ENCODE measurements at regions of chr4 and their contacts with region 1.

Region 1: DNA sequence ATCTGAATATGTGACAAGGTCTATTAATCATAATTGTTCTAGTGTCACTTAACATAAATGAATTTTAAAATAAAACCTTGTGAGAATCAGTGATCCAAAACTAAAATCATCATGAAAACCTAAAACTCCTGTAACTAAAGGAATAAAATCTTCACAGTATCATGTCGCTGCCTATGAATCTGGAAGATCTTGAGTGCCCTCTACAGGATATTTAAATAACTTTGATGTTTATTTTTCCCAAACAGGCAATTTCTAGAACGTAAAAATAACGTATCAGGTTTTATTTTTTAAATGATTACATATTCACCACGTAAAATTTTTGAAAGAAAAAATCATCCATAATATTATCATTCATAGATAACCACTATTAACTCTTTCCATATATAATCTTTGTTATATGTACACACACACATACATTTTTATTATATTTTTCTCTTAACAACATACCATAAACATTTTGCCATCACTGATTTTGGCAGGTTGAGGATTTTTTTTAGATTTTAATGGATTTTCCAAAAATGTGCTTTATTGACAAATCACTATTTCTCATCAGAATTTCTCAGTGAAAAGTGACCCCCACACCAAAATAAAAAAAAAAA is 79.6 kb downstream of the COMMD8 start:
- DNase-seq: no peak
- H3K4me3 Mint-ChIP-seq: no peak overlapping the region
- H3K27ac Mint-ChIP-seq: no peak overlapping the region
- H3K4me1 Mint-ChIP-seq: no peaks in the 10 kb centered on the region
- H3K27me3 Mint-ChIP-seq: peaks cover 9% of the 10 kb centered on the region
- CTCF ChIP-seq: no peak

Region 2: GRCh38 chr4:46844325-46844917 is 539.5 kb before region 1 on chr4:
- CTCF ChIA-PET with region 1: no interaction called
- intact Hi-C with region 1: loop called (anchors 2 kb)
- DNase-seq: peak; percentile 53
- H3K4me3 Mint-ChIP-seq: no peak overlapping the region
- H3K27ac Mint-ChIP-seq: no peak overlapping the region
- H3K4me1 Mint-ChIP-seq: no peaks in the 10 kb centered on the region
- H3K27me3 Mint-ChIP-seq: peaks cover 20% of the 10 kb centered on the region
- CTCF ChIP-seq: peak; percentile 59

Region 3: DNA sequence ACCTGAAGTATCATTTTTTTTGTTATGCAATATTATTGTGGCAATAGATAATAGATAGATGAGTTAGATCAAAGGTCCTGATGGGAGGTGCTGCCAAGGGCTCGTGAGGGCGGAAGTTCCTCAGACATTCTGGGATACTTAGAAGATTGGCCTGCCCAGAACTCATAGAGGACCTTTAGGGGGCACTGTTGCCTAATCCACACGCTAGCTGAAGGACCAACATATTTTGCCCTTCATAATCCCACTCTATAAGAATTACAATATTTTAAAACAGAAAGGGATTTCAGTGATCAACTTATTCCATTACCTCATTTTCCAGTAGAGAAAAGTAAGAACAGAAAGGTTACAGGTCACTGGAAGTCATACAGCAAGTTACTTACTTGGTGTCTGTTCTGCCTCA is 451.9 kb before region 1 on chr4:
- CTCF ChIA-PET with region 1: no interaction called
- intact Hi-C with region 1: loop called (anchors 5 kb)
- DNase-seq: peak; percentile 30
- H3K4me3 Mint-ChIP-seq: no peak overlapping the region
- H3K27ac Mint-ChIP-seq: no peak overlapping the region
- H3K4me1 Mint-ChIP-seq: no peaks in the 10 kb centered on the region
- H3K27me3 Mint-ChIP-seq: no peaks in the 10 kb centered on the region
- CTCF ChIP-seq: no peak

Region 4: DNA sequence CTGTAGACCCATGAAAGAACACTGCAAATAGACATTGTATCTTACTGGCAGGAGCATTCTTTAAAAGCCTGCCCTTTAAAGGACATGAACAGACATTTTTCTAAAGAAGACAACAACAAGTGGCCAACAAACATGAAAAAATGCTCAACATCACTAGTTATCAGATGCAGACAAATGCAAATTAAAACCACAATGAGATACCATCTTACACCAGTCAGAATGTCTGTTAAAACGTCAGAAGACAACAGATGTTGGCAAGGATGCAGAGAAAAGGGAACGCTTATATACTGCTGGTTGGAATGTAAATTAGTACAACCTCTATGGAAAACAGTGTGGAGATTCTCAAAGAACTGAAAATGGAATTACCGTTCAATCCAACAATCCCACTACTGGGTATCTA is 178.4 kb after region 1 on chr4:
- CTCF ChIA-PET with region 1: no interaction called
- intact Hi-C with region 1: loop called (anchors 10 kb)
- DNase-seq: no peak
- H3K4me3 Mint-ChIP-seq: no peak overlapping the region
- H3K27ac Mint-ChIP-seq: no peak overlapping the region
- H3K4me1 Mint-ChIP-seq: peaks cover 10% of the 10 kb centered on the region
- H3K27me3 Mint-ChIP-seq: no peaks in the 10 kb centered on the region
- CTCF ChIP-seq: no peak

Region 5: DNA sequence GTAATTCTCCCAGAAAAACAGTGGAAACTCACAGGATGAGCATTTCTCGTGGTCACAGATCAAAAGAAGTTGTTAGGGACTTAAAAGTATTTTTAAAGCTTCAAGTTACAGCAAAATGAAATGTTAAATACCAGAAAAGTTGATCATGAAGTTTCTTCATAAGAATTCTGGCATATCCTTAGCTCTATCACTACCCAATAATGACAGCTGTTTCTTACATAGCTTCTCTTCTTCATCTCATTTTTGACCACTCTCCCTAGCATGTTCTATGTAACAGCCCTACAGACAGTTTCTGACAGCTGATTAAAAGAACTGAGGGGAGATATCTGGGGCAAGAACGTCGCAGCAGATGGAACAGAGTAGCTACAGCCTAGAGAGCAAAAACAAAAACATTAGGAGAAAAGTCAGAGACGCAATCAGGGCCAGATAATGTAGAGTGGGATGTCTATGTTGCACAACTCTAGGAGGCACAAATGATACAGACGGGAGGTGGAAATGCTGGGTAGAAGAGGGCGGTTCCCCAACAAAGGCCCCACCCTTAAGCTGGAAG is 345.3 kb after region 1 on chr4:
- CTCF ChIA-PET with region 1: no interaction called
- intact Hi-C with region 1: no loop called
- DNase-seq: no peak
- H3K4me3 Mint-ChIP-seq: no peak overlapping the region
- H3K27ac Mint-ChIP-seq: no peak overlapping the region
- H3K4me1 Mint-ChIP-seq: no peaks in the 10 kb centered on the region
- H3K27me3 Mint-ChIP-seq: peaks cover 30% of the 10 kb centered on the region
- CTCF ChIP-seq: no peak

Measured in Calu3 (cell line).